Caco-2 (cell line): ENCODE measurements at regions of chr2 and their contacts with region 1.

Region 1: GRCh38 chr2:181466661-181467576 is 9.7 kb downstream of the ITGA4 start:
- DNase-seq: peak; percentile 52 to 56
- H3K4me3 ChIP-seq: no peak overlapping the region
- H3K4me3 Mint-ChIP-seq: no peak overlapping the region
- H3K27ac Mint-ChIP-seq: no peak overlapping the region
- H3K4me1 ChIP-seq: no peaks in the 10 kb centered on the region
- H3K4me1 Mint-ChIP-seq: no peaks in the 10 kb centered on the region
- H3K27me3 ChIP-seq: no peaks in the 10 kb centered on the region
- H3K27me3 Mint-ChIP-seq: peaks cover 16% of the 10 kb centered on the region
- CTCF ChIP-seq: peak; percentile 77 to 82

Region 2: GRCh38 chr2:181077128-181077709 is 389.7 kb before region 1 on chr2:
- CTCF ChIA-PET with region 1: no interaction called
- POLR2A ChIA-PET with region 1: no interaction called
- intact Hi-C with region 1: loop called (anchors 1 kb)
- DNase-seq: peak in 1 of 2 experiments; percentile 36
- H3K4me3 ChIP-seq: no peak overlapping the region
- H3K4me3 Mint-ChIP-seq: no peak overlapping the region
- H3K27ac Mint-ChIP-seq: no peak overlapping the region
- H3K4me1 ChIP-seq: no peaks in the 10 kb centered on the region
- H3K4me1 Mint-ChIP-seq: no peaks in the 10 kb centered on the region
- H3K27me3 ChIP-seq: no peaks in the 10 kb centered on the region
- H3K27me3 Mint-ChIP-seq: peaks cover 2% of the 10 kb centered on the region
- CTCF ChIP-seq: peak; percentile 51 to 72

Region 3: DNA sequence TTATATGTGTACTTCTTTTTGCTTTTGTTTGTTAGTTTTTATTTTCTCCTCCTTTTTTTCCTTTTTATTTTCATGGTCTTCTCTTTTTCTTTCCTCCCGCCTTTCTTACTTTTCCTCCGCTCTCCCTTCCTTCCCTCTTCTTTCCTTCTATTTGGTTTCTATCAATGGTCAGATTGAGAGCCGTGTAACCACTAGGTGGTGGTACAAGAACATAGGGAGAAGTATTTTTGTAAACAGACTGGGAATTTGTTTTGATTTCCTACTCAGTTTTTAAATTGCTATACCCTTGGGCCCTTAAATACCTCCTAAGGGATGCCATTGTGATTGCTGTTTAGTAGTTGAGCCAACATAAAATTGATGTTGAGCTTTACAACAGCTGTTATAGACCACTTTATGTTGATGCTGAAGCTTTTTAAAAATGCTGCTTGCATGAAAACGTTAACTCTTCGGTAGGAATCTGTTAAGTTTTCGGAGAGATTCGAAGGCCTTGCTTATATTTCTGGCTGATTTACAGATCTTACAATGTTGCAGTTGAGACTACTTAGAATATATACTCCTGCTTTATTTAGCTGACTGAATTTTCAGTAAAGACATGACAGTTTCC is 362.3 kb before region 1 on chr2:
- CTCF ChIA-PET with region 1: no interaction called
- POLR2A ChIA-PET with region 1: no interaction called
- intact Hi-C with region 1: loop called (anchors 1 kb)
- DNase-seq: peak in 1 of 2 experiments; percentile 16
- H3K4me3 ChIP-seq: no peak overlapping the region
- H3K4me3 Mint-ChIP-seq: no peak overlapping the region
- H3K27ac Mint-ChIP-seq: no peak overlapping the region
- H3K4me1 ChIP-seq: no peaks in the 10 kb centered on the region
- H3K4me1 Mint-ChIP-seq: no peaks in the 10 kb centered on the region
- H3K27me3 ChIP-seq: no peaks in the 10 kb centered on the region
- H3K27me3 Mint-ChIP-seq: peaks cover 6% of the 10 kb centered on the region
- CTCF ChIP-seq: peak; percentile 57 to 58

Region 4: GRCh38 chr2:181326661-181327060 is 140.3 kb before region 1 on chr2:
- CTCF ChIA-PET with region 1: no interaction called
- POLR2A ChIA-PET with region 1: no interaction called
- intact Hi-C with region 1: loop called (anchors 10 kb)
- DNase-seq: no peak
- H3K4me3 ChIP-seq: no peak overlapping the region
- H3K4me3 Mint-ChIP-seq: no peak overlapping the region
- H3K27ac Mint-ChIP-seq: no peak overlapping the region
- H3K4me1 ChIP-seq: no peaks in the 10 kb centered on the region
- H3K4me1 Mint-ChIP-seq: no peaks in the 10 kb centered on the region
- H3K27me3 ChIP-seq: no peaks in the 10 kb centered on the region
- H3K27me3 Mint-ChIP-seq: peaks cover 3% of the 10 kb centered on the region
- CTCF ChIP-seq: no peak